Heart right ventricle (tissue), 16 donors: ENCODE measurements at regions of chr9 and their contacts with region 1.

Region 1: DNA sequence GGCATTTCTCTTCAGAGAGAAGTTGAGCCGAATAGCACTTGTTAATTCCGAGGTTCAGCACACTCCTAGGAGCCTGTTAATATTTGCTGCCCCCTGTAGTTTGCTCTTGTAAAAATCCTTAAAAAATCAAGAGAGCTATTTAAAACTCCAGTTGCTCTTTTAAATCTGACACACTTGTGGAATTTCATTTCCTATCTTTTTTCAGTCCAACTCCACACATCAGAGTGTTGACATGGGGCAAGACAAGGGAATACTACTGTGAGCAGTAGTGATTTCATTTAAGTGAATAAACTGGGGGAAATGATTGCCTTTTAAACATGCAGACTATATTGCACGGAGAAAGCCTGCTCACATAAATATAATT is 1096.3 kb upstream of the DMAC1 start:
- DNase-seq: peak in 1 of 2 donors; percentile 9
- ATAC-seq: peak; percentile 64 to 84 (median 75)
- H3K4me3 ChIP-seq: peak overlapping the region in 2 of 10 donors; percentile 26 to 28
- H3K27ac ChIP-seq: no peak overlapping the region
- H3K4me1 ChIP-seq: peaks cover 0 to 7% (median 0%) of the 10 kb centered on the region in 9 donors
- H3K27me3 ChIP-seq: no peaks in the 10 kb centered on the region
- CTCF ChIP-seq: peak; percentile 15 to 72 (median 61)

Region 2: GRCh38 chr9:7560669-7561305 is 1335.1 kb before region 1 on chr9:
- intact Hi-C with region 1: loop called in 1 of 10 experiments (anchors 10 kb)
- DNase-seq: no peak
- ATAC-seq: peak in 3 of 8 donors; percentile 33 to 67 (median 64)
- H3K4me3 ChIP-seq: no peak overlapping the region
- H3K27ac ChIP-seq: no peak overlapping the region
- H3K4me1 ChIP-seq: peaks cover 0 to 4% (median 0%) of the 10 kb centered on the region in 9 donors
- H3K27me3 ChIP-seq: peaks cover 0 to 4% (median 0%) of the 10 kb centered on the region in 7 donors
- CTCF ChIP-seq: no peak

Region 3: GRCh38 chr9:8486095-8486494 is 409.7 kb before region 1 on chr9:
- intact Hi-C with region 1: loop called in 7 of 10 experiments (anchors 1 to 10 kb)
- DNase-seq: peak in 1 of 2 donors; percentile 25
- ATAC-seq: peak; percentile 67 to 81 (median 78)
- H3K4me3 ChIP-seq: no peak overlapping the region
- H3K27ac ChIP-seq: no peak overlapping the region
- H3K4me1 ChIP-seq: no peaks in the 10 kb centered on the region
- H3K27me3 ChIP-seq: no peaks in the 10 kb centered on the region
- CTCF ChIP-seq: peak; percentile 5 to 58 (median 48)

Region 4: GRCh38 chr9:8733131-8733954 is 162.5 kb before region 1 on chr9:
- intact Hi-C with region 1: no loop called
- DNase-seq: peak in 1 of 2 donors; percentile 34
- ATAC-seq: peak in 5 of 8 donors; percentile 53 to 73 (median 59)
- H3K4me3 ChIP-seq: peak overlapping the region in 8 of 10 donors; percentile 9 to 47 (median 26)
- H3K27ac ChIP-seq: peak overlapping the region in 1 of 10 donors; percentile 40
- H3K4me1 ChIP-seq: peaks cover 0 to 13% (median 0%) of the 10 kb centered on the region in 9 donors
- H3K27me3 ChIP-seq: no peaks in the 10 kb centered on the region
- CTCF ChIP-seq: no peak

Region 5: DNA sequence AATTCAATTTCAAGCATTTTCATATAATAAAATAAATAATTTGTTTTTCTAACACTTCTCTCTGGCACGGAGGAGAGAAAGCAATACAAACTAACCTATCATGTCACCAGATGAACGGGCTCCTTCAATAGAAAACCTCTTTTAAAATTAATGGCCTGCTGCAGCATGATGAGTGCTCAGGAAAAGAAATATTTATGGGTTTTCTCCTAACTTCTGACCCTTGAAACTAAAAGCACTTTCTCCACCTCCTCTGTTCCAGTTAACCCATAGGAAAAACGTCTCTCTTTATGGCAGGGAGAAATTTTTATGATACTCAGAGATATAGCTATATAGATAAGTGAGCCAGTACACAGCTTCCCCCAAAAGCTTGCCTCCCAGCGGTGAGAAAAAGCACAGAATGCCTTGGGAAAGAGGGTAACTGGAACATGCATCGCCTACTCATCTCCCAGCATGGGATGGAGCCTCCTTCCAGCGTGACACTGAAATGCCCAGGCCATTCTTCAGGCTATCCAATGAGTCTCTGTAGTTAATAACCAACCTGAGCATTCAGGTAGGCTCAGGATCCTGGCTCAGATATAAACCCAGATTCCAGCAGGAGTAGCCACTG is 133.3 kb before region 1 on chr9:
- intact Hi-C with region 1: no loop called
- DNase-seq: no peak
- ATAC-seq: no peak
- H3K4me3 ChIP-seq: no peak overlapping the region
- H3K27ac ChIP-seq: no peak overlapping the region
- H3K4me1 ChIP-seq: no peaks in the 10 kb centered on the region
- H3K27me3 ChIP-seq: no peaks in the 10 kb centered on the region
- CTCF ChIP-seq: no peak

Region 6: DNA sequence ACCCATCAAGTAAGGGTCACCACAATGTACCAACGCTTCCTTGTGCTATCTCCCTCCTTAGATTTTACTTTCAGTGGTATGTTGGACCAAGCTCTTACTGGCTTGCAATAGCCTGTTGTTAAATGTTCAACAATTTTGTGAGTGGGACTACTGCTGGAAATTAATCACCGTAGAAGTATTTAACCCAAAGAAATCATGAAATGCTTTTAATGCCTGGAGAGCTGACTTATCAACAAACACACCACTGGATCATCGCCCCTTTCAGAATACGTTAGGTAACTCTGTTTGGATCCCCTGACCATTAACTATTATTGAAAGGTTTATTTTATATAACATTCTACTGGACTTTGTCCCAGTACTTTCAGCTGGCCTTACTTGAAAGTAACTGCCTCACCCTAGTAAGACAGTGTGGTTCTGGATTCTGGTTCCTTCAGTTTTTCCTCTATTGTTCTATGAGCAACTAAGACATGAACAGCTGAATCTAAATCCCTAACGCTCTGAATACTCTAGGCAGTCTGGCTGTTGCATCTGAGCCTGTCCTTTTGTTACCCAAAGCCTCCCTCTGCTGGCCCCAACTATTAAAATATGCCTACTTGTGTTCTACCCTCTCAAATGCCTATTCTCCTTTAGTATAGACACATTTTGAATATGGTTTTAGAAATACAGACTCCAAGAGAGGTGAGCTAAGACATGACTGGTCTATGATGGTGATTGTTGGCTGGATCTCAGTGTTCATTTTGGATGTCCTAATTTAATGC is 107.2 kb after region 1 on chr9:
- intact Hi-C with region 1: loop called in 1 of 10 experiments (anchors 10 kb)
- DNase-seq: peak in 1 of 2 donors; percentile 17
- ATAC-seq: peak in 7 of 8 donors; percentile 67 to 88 (median 77)
- H3K4me3 ChIP-seq: no peak overlapping the region
- H3K27ac ChIP-seq: no peak overlapping the region
- H3K4me1 ChIP-seq: peaks cover 0 to 9% (median 0%) of the 10 kb centered on the region in 9 donors
- H3K27me3 ChIP-seq: no peaks in the 10 kb centered on the region
- CTCF ChIP-seq: peak in 7 of 9 donors; percentile 19 to 56 (median 45)